Activated B cell treated with CpG ODN at 0.5 μM for 24 hours (primary cell): ENCODE measurements at regions of chr7 and their contacts with region 1.

Region 1: DNA sequence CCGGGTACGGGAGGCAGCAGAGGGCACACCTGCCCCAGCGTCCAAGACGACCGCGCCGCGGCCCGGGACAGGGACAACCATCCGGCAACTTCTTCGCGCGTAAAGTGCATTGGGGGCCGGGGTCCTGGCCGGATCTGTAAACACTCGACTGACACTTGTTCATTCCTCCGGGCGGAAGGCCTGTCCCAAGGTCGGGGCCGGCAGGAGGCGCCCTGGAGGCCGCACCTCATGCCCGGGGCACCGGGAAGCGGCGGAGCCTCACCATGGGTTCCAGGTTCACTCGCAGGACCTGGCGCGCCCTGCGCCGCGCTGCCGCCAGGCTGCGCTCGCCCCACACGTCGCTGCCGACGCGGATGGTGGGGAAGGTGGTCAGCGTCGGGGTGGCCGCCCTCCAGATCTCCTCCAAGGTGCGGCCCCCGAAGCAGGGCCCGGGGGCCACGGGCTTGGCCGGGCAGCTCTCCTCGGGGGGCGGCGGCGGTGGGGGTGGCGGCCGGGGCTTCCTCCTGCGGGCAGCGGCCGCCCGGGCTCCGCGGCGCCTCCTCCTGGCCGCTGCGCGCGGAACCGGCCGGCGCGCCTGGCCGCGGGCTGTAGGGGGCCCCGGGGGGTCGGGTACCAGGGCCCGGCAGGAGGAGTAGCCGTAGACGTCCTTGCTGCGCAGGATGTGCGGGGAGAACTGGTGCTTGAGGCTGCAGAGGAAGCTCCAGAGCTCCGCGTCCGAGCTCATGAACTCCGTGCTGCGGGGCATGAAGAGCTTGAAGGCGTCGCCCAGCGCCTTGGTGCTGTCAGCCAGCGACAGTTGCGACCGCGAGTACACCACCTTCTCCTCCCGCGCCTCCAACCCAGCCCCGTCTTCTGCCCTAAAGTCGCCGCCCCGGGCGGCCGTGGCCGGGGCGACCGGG is 746 bp downstream of the CCDC71L start:
- DNase-seq: peak; percentile 79
- ATAC-seq: peak; percentile 52
- H3K4me3 Mint-ChIP-seq: peak overlapping the region; percentile 94
- H3K27ac Mint-ChIP-seq: peak overlapping the region; percentile 90
- H3K4me1 Mint-ChIP-seq: peaks cover 34% of the 10 kb centered on the region
- H3K27me3 Mint-ChIP-seq: no peaks in the 10 kb centered on the region
- CTCF ChIP-seq: peak; percentile 84

Region 2: GRCh38 chr7:106552645-106553445 is 107.4 kb before region 1 on chr7:
- CTCF ChIA-PET with region 1: interaction called, 8 read pairs
- POLR2A ChIA-PET with region 1: interaction called, 4 read pairs
- intact Hi-C with region 1: loop called (anchors 1 kb)
- DNase-seq: peak; percentile 27
- ATAC-seq: peak; percentile 92
- H3K4me3 Mint-ChIP-seq: peak overlapping the region; percentile 39
- H3K27ac Mint-ChIP-seq: peak overlapping the region; percentile 89
- H3K4me1 Mint-ChIP-seq: peaks cover 39% of the 10 kb centered on the region
- H3K27me3 Mint-ChIP-seq: no peaks in the 10 kb centered on the region
- CTCF ChIP-seq: no peak

Region 3: DNA sequence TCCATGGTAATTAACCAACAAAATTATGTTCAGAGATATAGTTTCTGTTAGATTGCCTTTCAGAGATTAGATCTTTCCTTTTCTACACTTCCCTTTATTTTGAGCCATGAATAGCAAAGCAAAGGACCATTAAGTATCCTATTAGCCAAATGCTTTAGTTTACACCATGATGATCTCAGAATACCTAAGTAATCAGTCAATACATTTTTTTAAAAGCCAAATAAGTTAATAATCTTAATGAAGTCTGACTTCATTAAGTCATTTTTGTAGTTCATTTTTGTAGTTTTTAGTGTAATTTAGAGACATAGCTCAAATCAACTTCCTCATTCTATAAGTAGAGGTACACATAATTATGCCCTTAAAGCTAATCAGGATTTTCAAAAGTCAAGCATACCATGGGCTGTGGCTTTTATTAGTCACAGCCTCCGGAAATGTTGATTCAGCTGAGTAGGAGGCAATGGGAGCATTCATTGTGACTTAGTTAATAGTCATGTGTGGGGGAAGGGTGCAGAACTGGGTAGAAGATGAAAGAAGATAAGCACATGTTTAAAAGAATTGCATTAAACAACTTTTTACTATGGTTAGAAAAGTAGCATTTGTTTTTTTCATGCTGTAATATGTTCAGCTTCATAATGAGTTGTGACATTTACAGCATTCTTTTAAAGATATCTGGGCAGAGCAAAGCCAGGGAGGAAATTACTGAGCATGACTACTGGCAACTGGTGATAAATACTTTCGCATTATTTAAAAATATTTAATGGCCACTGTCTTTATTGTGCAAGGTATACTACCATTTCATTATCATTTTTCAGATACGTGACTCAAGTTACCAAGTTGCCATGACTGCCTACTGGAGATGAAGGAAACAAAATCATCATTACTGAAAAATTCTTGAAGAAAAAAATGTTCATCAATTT is 58.0 kb after region 1 on chr7:
- CTCF ChIA-PET with region 1: interaction called, 77 read pairs
- POLR2A ChIA-PET with region 1: interaction called, 58 read pairs
- intact Hi-C with region 1: loop called (anchors 1 kb)
- DNase-seq: no peak
- ATAC-seq: peak; percentile 88
- H3K4me3 Mint-ChIP-seq: no peak overlapping the region
- H3K27ac Mint-ChIP-seq: no peak overlapping the region
- H3K4me1 Mint-ChIP-seq: peaks cover 12% of the 10 kb centered on the region
- H3K27me3 Mint-ChIP-seq: no peaks in the 10 kb centered on the region
- CTCF ChIP-seq: no peak

Region 4: GRCh38 chr7:106744563-106745091 is 84.4 kb after region 1 on chr7:
- CTCF ChIA-PET with region 1: interaction called, 5 read pairs
- POLR2A ChIA-PET with region 1: interaction called, 11 read pairs
- intact Hi-C with region 1: no loop called
- DNase-seq: no peak
- ATAC-seq: no peak
- H3K4me3 Mint-ChIP-seq: no peak overlapping the region
- H3K27ac Mint-ChIP-seq: no peak overlapping the region
- H3K4me1 Mint-ChIP-seq: no peaks in the 10 kb centered on the region
- H3K27me3 Mint-ChIP-seq: no peaks in the 10 kb centered on the region
- CTCF ChIP-seq: no peak

Region 5: GRCh38 chr7:106865130-106866041 is 205.2 kb after region 1 on chr7 and contains the start of gene PIK3CG:
- CTCF ChIA-PET with region 1: no interaction called
- POLR2A ChIA-PET with region 1: interaction called, 3 read pairs
- intact Hi-C with region 1: loop called (anchors 1 kb)
- DNase-seq: no peak
- ATAC-seq: peak; percentile 83
- H3K4me3 Mint-ChIP-seq: peak within 1 kb of the TSS; percentile 91
- H3K27ac Mint-ChIP-seq: peak within 1 kb of the TSS; percentile 90
- H3K4me1 Mint-ChIP-seq: peaks cover 71% of the 10 kb centered on the region
- H3K27me3 Mint-ChIP-seq: no peaks in the 10 kb centered on the region
- CTCF ChIP-seq: no peak
- total RNA-seq, gene PIK3CG: 62.0 and 63.6 TPM in 2 replicates